A673 (cell line): ENCODE measurements at regions of chr1 and their contacts with region 1.

Region 1: GRCh38 chr1:157156058-157156541 is 17.9 kb upstream of the ETV3 start:
- DNase-seq: peak; percentile 79
- H3K4me3 ChIP-seq: no peak overlapping the region
- H3K27ac ChIP-seq: no peak overlapping the region
- H3K4me1 ChIP-seq: peaks cover 56% of the 10 kb centered on the region
- H3K27me3 ChIP-seq: no peaks in the 10 kb centered on the region
- CTCF ChIP-seq: peak; percentile 96

Region 2: DNA sequence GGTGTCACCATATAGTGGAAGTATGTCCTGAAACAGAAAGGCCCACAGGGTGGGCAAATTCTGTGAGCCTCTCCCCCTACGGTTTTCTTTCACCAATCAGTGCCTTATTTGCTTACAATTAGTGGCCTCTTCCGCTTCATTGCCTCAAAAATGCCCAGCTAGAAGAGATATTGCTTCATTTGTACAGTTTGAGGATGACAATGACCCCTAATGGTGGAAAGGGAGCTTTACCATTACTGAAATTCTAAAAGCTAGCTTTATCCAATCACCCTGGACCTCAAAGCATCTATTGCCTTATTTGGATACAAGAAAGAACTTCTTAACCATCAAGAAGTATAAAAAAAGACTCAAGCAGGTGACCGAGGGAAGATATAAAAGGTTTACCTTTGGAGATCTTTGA is 186.1 kb before region 1 on chr1:
- CTCF ChIA-PET with region 1: no interaction called
- POLR2A ChIA-PET with region 1: no interaction called
- intact Hi-C with region 1: no loop called
- DNase-seq: peak; percentile 19
- H3K4me3 ChIP-seq: no peak overlapping the region
- H3K27ac ChIP-seq: no peak overlapping the region
- H3K4me1 ChIP-seq: no peaks in the 10 kb centered on the region
- H3K27me3 ChIP-seq: no peaks in the 10 kb centered on the region
- CTCF ChIP-seq: peak; percentile 40

Region 3: GRCh38 chr1:157090196-157090647 is 65.9 kb before region 1 on chr1:
- CTCF ChIA-PET with region 1: interaction called, 98 read pairs
- POLR2A ChIA-PET with region 1: no interaction called
- intact Hi-C with region 1: loop called (anchors 1 kb)
- DNase-seq: peak; percentile 95
- H3K4me3 ChIP-seq: no peak overlapping the region
- H3K27ac ChIP-seq: peak overlapping the region; percentile 61
- H3K4me1 ChIP-seq: peaks cover 30% of the 10 kb centered on the region
- H3K27me3 ChIP-seq: no peaks in the 10 kb centered on the region
- CTCF ChIP-seq: peak; percentile 98

Region 4: DNA sequence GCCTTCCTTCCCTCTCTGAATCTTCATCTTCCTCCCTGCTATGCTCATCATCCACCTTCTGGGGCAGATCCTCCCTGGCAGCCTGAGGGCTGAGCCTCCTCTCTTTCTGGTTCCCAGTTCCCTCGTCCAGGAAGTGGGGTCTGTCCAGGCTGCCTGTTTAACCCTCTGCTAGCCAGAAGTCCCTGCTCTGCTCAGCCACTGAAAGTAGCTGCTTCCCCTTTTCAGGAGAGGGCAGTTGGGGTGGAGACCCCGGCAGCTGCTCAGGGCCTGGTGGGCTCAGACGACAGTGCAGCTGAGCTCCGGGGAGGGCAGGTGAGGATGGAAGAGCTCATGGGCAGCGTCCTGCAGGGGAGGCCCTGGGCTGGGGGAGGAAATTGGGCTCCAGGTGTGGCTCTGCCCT is 25.2 kb after region 1 on chr1:
- CTCF ChIA-PET with region 1: no interaction called
- POLR2A ChIA-PET with region 1: no interaction called
- intact Hi-C with region 1: no loop called
- DNase-seq: no peak
- H3K4me3 ChIP-seq: no peak overlapping the region
- H3K27ac ChIP-seq: no peak overlapping the region
- H3K4me1 ChIP-seq: no peaks in the 10 kb centered on the region
- H3K27me3 ChIP-seq: no peaks in the 10 kb centered on the region
- CTCF ChIP-seq: no peak